HEK293T (cell line): ENCODE measurements at regions of chr5 and their contacts with region 1.

Region 1: GRCh38 chr5:79133657-79134451 is 22.2 kb downstream of the BHMT start:
- DNase-seq: peak; percentile 58

Region 2: GRCh38 chr5:79030663-79031484 is 103.0 kb before region 1 on chr5:
- CTCF ChIA-PET with region 1: interaction called, 200 read pairs
- POLR2A ChIA-PET with region 1: interaction called, 5 read pairs
- DNase-seq: no peak

Region 3: DNA sequence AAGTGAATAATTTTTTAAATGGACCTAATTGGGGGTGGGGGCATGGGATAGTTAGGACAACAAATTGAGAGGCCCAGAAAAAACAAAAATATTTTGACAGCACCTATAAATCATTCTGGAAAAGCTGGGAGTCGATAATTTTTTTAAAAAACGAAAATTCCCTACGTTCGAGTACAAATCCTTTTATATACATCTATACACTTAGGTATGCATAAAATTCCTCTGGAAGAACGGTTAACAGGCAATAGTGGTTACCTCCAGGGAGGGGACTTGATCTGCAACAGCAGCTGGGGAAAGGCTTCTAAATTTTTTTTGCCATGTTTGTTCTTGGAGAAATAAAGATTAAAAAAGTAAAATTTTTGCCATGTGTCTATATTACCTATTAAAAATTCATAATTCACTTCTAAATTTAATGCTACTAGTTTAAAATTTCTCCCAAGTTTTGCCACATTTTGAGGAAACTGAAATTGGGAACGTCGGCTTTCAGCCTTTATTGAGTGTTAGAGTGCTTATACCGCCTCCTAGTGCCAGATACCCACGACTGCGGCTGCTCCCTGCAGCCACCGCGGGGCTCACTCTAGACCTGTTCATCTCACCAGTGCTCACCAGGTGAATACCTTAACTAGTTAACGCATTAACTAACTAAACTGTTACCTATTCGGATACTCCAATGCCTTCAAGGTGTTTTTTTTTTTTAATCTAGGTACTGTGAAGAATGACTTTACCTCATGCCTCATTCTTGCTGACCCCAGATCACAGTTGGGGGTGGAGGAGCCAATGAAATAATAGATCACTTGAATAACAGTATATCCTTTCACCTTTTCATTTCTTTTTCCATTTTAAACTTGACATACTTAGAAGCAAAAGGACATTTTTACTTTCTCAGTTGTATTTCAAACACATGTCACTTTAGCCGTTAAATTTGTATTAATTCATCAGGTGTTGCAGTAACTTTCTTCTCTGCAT is 24.0 kb before region 1 on chr5:
- CTCF ChIA-PET with region 1: interaction called, 18 read pairs
- POLR2A ChIA-PET with region 1: no interaction called
- DNase-seq: peak; percentile 28

Region 4: GRCh38 chr5:79464695-79465332 is 331.0 kb after region 1 on chr5:
- CTCF ChIA-PET with region 1: interaction called, 10 read pairs
- POLR2A ChIA-PET with region 1: no interaction called
- DNase-seq: peak; percentile 32